K562 (cell line): ENCODE measurements at regions of chr18 and their contacts with region 1.

Region 1: GRCh38 chr18:2932247-2933181 is 80.4 kb downstream of the LPIN2 start:
- DNase-seq: peak; percentile 59 to 77 (median 66)
- ATAC-seq: peak; percentile 85
- H3K4me3 ChIP-seq: no peak overlapping the region
- H3K27ac ChIP-seq: no peak overlapping the region
- H3K4me1 ChIP-seq: no peaks in the 10 kb centered on the region
- H3K27me3 ChIP-seq: no peaks in the 10 kb centered on the region
- CTCF ChIP-seq: peak; percentile 58 to 94 (median 64); a peak in 5 of 6 replicates
- EP300 ChIP-seq: no peak
- POLR2A ChIP-seq: no peak; the same call in 1 of the 2 replicates
- RAD21 ChIP-seq: peak; percentile 92 to 93

Region 2: DNA sequence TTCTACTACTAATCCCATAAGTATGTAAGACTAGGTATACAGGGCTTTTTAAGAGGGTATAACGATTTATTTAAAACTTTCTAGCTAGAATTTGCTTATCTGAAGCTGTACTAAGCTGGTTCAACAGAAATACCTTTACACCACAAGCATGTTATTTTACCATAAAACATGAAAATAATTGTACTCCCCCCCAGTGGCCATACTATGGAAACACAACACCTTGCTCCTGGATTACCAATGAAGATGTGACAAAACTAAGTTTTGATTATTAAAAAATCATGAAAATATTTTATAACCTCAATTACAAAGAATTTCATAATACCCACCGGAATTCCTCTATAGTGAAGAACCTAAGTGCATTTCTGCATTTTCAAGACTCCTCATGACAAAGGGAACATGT is 53.1 kb after region 1 on chr18:
- CTCF ChIA-PET with region 1: interaction called, 4 read pairs
- POLR2A ChIA-PET with region 1: no interaction called
- in situ Hi-C with region 1: no loop called
- intact Hi-C with region 1: loop called (anchors 1 kb)
- DNase-seq: peak; percentile 56 to 58 (median 57)
- ATAC-seq: peak; percentile 76
- H3K4me3 ChIP-seq: no peak overlapping the region
- H3K27ac ChIP-seq: no peak overlapping the region
- H3K4me1 ChIP-seq: peaks cover 3 to 23% of the 10 kb centered on the region in 2 experiments; a peak in 3 of 5 replicates
- H3K27me3 ChIP-seq: no peaks in the 10 kb centered on the region
- CTCF ChIP-seq: peak; percentile 37 to 78 (median 50); a peak in 4 of 6 replicates
- EP300 ChIP-seq: no peak
- POLR2A ChIP-seq: no peak
- RAD21 ChIP-seq: peak; percentile 44 to 72

Region 3: DNA sequence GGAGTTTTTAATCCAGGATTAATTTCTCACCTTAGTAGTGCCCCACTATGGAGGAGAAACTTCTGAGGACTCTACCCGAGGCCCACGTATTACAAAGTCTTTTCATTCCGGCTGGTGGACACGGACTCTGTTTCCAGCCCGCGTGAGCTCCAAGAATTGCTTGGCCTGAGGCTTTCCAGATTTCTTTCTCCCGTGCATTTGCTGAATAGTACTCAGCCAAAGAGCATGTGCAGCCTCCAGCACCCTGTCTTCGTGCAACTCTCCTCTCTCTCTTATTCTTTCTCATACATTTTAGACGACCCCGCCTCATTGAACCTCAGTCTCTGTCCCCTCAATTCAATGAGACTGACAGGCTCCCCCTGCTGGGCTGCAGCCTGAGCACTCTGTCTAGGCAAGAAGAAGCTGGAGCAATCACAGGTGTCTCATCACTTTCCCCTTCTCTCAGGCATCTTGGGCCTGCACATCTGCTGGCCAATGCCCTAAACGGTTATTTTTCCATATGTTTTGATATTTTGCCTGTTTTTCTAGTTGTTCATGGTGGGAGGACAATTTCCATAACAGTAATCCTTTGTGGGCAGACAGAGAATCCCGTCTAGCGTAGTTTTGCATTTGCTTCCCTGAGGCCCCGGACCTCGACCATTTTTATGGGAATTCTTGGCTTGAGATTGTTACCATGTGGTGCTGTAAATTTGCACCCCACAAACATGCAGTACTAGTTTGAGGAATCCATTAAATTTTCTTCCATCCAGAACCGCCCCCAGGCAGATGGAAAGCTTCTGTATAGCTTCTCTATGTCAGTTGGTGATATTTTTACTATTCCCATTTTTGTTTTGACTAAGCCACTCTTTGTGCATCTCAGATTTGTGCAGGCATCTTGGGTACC is 130.5 kb after region 1 on chr18:
- CTCF ChIA-PET with region 1: interaction called, 4 read pairs
- POLR2A ChIA-PET with region 1: no interaction called
- in situ Hi-C with region 1: loop called (anchors 10 kb)
- intact Hi-C with region 1: loop called (anchors 1 kb)
- DNase-seq: peak; percentile 34 to 80 (median 56)
- ATAC-seq: peak; percentile 94
- H3K4me3 ChIP-seq: no peak overlapping the region
- H3K27ac ChIP-seq: no peak overlapping the region
- H3K4me1 ChIP-seq: peaks cover 4 to 5% of the 10 kb centered on the region in 2 experiments; a peak in 4 of 5 replicates
- H3K27me3 ChIP-seq: no peaks in the 10 kb centered on the region
- CTCF ChIP-seq: peak; percentile 83 to 93 (median 86)
- EP300 ChIP-seq: no peak
- POLR2A ChIP-seq: no peak
- RAD21 ChIP-seq: peak; percentile 74 to 90

Region 4: DNA sequence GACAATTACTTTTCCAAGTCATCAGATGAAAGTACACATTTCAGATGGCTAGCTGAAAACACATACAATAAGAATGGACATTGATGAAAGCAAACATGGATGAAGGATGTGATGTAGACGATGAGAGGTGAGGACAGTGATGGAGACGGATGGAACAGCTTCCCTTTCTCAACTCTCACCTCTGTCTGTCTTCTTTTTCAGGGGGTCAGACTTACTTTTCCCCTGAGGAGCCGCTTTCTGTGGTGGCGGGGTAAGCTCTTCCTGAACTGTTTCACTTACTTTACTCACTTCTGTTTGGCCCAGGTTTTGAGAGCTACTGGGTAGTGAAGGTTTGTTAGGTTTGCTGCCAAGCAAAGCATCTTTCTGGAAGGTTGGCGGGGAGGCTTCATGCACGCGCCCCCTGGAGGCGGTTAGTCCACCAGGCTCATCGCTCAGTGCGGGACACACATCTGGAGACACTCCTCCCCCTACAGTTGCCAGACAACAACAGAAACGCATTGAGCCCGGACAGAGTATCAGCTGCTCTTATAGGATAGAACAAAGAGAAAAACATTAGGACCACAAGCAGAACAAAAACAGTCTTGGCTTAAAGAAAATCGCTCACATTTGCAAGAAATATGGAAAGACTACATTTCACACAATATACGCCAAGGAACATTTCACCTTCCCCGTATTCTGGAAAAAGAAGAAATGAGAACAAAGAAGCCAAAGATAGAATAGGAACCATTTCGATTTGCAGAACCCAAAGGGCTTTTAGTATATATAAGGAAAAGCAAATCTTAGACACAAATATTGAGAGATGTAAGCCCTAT is 196.7 kb after region 1 on chr18:
- CTCF ChIA-PET with region 1: interaction called, 19 read pairs
- POLR2A ChIA-PET with region 1: no interaction called
- in situ Hi-C with region 1: no loop called
- intact Hi-C with region 1: loop called (anchors 2 kb)
- DNase-seq: peak; percentile 79 to 93 (median 82)
- ATAC-seq: peak; percentile 100
- H3K4me3 ChIP-seq: no peak overlapping the region
- H3K27ac ChIP-seq: no peak overlapping the region
- H3K4me1 ChIP-seq: no peaks in the 10 kb centered on the region; a peak in 2 of 5 replicates
- H3K27me3 ChIP-seq: no peaks in the 10 kb centered on the region
- CTCF ChIP-seq: peak; percentile 98 to 99 (median 99)
- EP300 ChIP-seq: no peak; the same call in 1 of the 2 replicates
- POLR2A ChIP-seq: no peak
- RAD21 ChIP-seq: peak; percentile 81 to 93

Region 5: GRCh38 chr18:3151399-3152264 is 219.1 kb after region 1 on chr18:
- CTCF ChIA-PET with region 1: interaction called, 19 read pairs
- POLR2A ChIA-PET with region 1: no interaction called
- in situ Hi-C with region 1: loop called (anchors 5 kb)
- intact Hi-C with region 1: loop called (anchors 1 kb)
- DNase-seq: peak; percentile 52 to 65 (median 62)
- ATAC-seq: peak; percentile 36; the same call in 1 of the 3 replicates
- H3K4me3 ChIP-seq: no peak overlapping the region
- H3K27ac ChIP-seq: no peak overlapping the region
- H3K4me1 ChIP-seq: peaks cover 4 to 5% of the 10 kb centered on the region in 2 experiments; a peak in 2 of 5 replicates
- H3K27me3 ChIP-seq: no peaks in the 10 kb centered on the region
- CTCF ChIP-seq: peak; percentile 70 to 87 (median 70); a peak in 5 of 6 replicates
- EP300 ChIP-seq: no peak
- POLR2A ChIP-seq: no peak
- RAD21 ChIP-seq: peak; percentile 64 to 82

Region 6: DNA sequence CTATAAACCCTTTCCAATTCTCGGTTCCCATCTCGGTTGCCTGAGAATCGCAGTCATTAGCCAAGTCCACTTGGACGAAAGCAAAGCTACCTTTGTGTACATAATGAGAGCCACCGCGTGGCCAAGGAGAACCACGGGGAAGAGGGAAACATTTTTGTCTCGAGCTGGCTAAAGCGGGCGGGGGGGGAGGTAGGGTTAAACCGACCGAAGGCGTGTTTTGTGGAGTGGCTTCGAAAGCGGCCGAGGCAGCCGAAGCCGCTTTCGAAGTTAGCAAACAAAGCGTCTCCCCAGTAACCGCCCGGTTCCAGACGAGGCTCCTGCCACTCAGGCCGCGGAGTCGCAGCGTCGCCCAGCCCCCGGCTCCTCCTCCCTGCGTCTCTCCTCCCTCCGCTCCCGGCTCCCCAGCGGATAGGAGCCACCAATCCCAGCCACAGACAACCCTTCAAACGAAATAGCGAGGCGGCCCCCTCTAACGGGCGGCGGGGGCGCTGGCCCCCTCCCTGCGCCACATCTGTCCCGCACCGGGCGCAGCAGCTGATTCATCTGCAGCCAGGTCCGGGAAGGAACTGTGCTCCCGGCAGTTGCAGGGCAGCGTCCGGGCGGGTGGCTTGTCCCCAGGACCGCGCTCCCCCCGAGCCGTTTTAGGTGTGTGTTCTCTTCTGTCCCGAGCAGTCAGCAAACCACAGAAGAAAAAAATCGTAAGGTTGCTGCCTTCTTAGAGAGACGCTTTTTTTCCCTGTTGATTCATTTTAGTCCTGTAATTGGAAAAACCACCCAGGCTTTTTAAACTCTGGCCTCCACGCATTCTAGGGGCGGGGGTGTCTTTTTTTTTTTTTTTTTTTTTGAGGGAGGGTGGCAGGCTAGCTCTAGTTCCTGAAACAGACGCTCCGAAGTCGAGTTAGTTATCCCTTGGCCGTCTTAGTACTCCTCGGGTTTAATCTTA is 515.7 kb after region 1 on chr18:
- CTCF ChIA-PET with region 1: no interaction called
- POLR2A ChIA-PET with region 1: no interaction called
- in situ Hi-C with region 1: loop called (anchors 10 kb)
- intact Hi-C with region 1: no loop called
- DNase-seq: peak; percentile 85 to 99 (median 89)
- ATAC-seq: peak; percentile 78
- H3K4me3 ChIP-seq: peak overlapping the region; percentile 87
- H3K27ac ChIP-seq: peak overlapping the region; percentile 98
- H3K4me1 ChIP-seq: peaks cover 31 to 51% of the 10 kb centered on the region in 2 experiments
- H3K27me3 ChIP-seq: no peaks in the 10 kb centered on the region
- CTCF ChIP-seq: peak in 2 of 3 experiments; percentile 31 to 49; a peak in 2 of 6 replicates
- EP300 ChIP-seq: peak; percentile 81
- POLR2A ChIP-seq: no peak
- RAD21 ChIP-seq: peak in 1 of 2 experiments; percentile 33; a peak in 3 of 4 replicates

Region 7: GRCh38 chr18:3995476-3996102 is 1063.1 kb after region 1 on chr18:
- CTCF ChIA-PET with region 1: interaction called, 3 read pairs
- POLR2A ChIA-PET with region 1: no interaction called
- in situ Hi-C with region 1: loop called (anchors 25 kb)
- intact Hi-C with region 1: no loop called
- DNase-seq: peak; percentile 38 to 84 (median 48)
- ATAC-seq: peak; percentile 84
- H3K4me3 ChIP-seq: no peak overlapping the region
- H3K27ac ChIP-seq: no peak overlapping the region
- H3K4me1 ChIP-seq: no peaks in the 10 kb centered on the region
- H3K27me3 ChIP-seq: peaks cover 0 to 5% of the 10 kb centered on the region in 2 experiments; a peak in 1 of 5 replicates
- CTCF ChIP-seq: peak; percentile 76 to 90 (median 80)
- EP300 ChIP-seq: no peak
- POLR2A ChIP-seq: no peak
- RAD21 ChIP-seq: peak; percentile 52 to 66; a peak in 3 of 4 replicates